ENCODE measurements at regions of chr19 and their contacts with region 1.

Region 1: GRCh38 chr19:56333505-56333904 is 18.9 kb upstream of the ZSCAN5A start:
- DNase-seq: peak in 5 of 9 donors; percentile 13 to 43 (median 32)
- ATAC-seq: peak; percentile 76
- H3K4me3 ChIP-seq: no peak overlapping the region
- H3K4me3 Mint-ChIP-seq: no peak overlapping the region
- H3K27ac ChIP-seq: no peak overlapping the region
- H3K27ac Mint-ChIP-seq: no peak overlapping the region
- H3K4me1 ChIP-seq: no peaks in the 10 kb centered on the region
- H3K4me1 Mint-ChIP-seq: no peaks in the 10 kb centered on the region
- H3K27me3 ChIP-seq: no peaks in the 10 kb centered on the region
- H3K27me3 Mint-ChIP-seq: peaks cover 0 to 9% (median 4%) of the 10 kb centered on the region in 5 donors

Region 2: DNA sequence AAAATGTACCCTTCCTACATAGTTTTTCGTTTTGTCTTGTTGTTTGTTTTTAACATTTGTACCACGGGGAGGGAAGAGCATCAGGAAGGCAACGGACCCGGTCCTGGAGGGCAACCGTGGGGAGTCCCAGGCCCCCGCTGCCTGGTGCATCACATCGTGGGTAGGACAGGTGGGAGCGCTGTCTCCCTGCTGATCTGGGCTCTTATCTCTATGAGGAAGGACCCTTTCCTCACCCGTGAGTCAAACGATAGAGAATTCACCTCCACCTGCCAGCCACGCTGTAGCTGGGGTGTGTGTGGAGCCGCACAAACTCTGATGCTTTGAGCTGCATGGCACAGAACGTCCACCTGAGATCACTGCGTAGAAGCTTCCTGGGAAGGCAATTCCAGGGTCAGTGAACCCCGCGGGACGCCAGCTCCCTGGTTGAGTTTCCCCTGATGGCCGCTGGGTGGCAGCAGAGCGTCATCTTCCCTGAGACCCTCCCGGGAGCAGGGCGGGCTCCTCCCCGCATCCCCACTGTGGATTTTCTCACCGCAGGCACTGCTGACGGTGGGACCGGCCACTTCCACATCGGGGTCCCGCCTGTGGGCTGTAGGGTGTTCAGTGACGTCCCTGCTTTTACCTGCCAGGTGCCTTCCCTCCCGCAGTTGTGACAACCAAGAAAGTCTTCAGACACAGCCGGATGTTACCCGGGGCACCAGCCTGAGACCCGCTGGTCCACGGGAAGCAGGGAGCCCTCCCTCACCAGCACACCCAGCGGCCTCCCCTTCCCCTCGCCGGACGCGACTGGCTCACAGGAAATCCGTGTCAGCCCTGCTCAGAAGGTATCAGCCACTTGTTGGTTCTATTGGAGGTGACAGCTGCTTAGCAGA is 267.1 kb before region 1 on chr19:
- CTCF ChIA-PET with region 1: interaction called, 6 read pairs
- POLR2A ChIA-PET with region 1: no interaction called
- intact Hi-C with region 1: loop called (anchors 1 kb)
- DNase-seq: peak; percentile 38 to 67 (median 58)
- ATAC-seq: peak; percentile 74
- H3K4me3 ChIP-seq: peak overlapping the region; percentile 38
- H3K4me3 Mint-ChIP-seq: peak overlapping the region; percentile 44 to 80 (median 74)
- H3K27ac ChIP-seq: no peak overlapping the region
- H3K27ac Mint-ChIP-seq: peak overlapping the region in 1 of 9 donors; percentile 17
- H3K4me1 ChIP-seq: no peaks in the 10 kb centered on the region
- H3K4me1 Mint-ChIP-seq: peaks cover 4 to 14% (median 12%) of the 10 kb centered on the region in 7 donors
- H3K27me3 ChIP-seq: no peaks in the 10 kb centered on the region
- H3K27me3 Mint-ChIP-seq: peaks cover 0 to 45% (median 38%) of the 10 kb centered on the region in 5 donors

Region 3: DNA sequence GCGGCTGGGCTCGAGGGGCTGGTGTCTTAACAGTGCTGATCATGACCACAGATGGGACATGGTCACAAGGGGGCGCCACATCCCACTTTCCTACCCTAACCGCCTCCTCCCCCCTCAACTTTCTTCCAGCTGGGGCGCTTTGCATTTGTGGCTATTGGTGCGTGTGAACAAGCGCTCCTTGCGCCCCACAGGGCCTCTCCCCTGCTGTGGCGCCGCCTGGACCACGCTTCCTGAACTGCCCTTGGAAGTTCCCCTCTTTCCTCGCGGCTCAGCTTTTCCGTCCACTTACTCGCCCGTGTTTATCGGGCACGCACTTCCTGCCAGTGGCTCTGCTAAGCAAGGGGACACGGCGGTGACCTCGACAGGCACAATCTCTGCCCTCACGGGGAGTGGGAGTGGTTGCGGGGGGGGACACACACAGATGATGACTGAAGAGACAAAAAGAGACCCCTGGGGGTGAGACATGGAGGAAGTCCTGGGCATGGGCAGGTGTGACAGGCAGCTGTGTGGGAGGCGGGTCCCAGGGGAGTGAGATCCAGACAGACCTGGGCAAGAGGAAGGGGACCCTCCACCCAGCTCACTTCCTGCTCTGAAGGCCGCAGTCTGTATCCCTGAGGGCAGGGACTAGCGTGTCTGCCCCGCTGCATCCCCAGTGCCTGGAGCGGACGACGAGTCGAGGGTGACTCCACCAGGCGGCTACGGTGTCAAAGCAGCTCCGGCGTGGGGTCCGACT is 252.7 kb before region 1 on chr19:
- CTCF ChIA-PET with region 1: interaction called, 9 read pairs
- POLR2A ChIA-PET with region 1: no interaction called
- intact Hi-C with region 1: loop called (anchors 1 kb)
- DNase-seq: peak; percentile 22 to 69 (median 47)
- ATAC-seq: peak; percentile 81
- H3K4me3 ChIP-seq: peak overlapping the region; percentile 58
- H3K4me3 Mint-ChIP-seq: peak overlapping the region; percentile 70 to 89 (median 80)
- H3K27ac ChIP-seq: no peak overlapping the region
- H3K27ac Mint-ChIP-seq: peak overlapping the region in 1 of 9 donors; percentile 31
- H3K4me1 ChIP-seq: peaks cover 7 to 8% of the 10 kb centered on the region in 2 donors
- H3K4me1 Mint-ChIP-seq: peaks cover 8 to 11% (median 11%) of the 10 kb centered on the region in 7 donors
- H3K27me3 ChIP-seq: no peaks in the 10 kb centered on the region
- H3K27me3 Mint-ChIP-seq: peaks cover 4 to 13% (median 10%) of the 10 kb centered on the region in 5 donors

Region 4: GRCh38 chr19:56125806-56126590 is 207.5 kb before region 1 on chr19:
- CTCF ChIA-PET with region 1: no interaction called
- POLR2A ChIA-PET with region 1: no interaction called
- intact Hi-C with region 1: no loop called
- DNase-seq: no peak
- ATAC-seq: no peak
- H3K4me3 ChIP-seq: no peak overlapping the region
- H3K4me3 Mint-ChIP-seq: peak overlapping the region in 2 of 10 donors; percentile 48 to 83
- H3K27ac ChIP-seq: no peak overlapping the region
- H3K27ac Mint-ChIP-seq: peak overlapping the region; percentile 19 to 95 (median 76)
- H3K4me1 ChIP-seq: peaks cover 5 to 34% of the 10 kb centered on the region in 2 donors
- H3K4me1 Mint-ChIP-seq: peaks cover 6 to 42% (median 34%) of the 10 kb centered on the region in 7 donors
- H3K27me3 ChIP-seq: no peaks in the 10 kb centered on the region
- H3K27me3 Mint-ChIP-seq: no peaks in the 10 kb centered on the region

Region 5: DNA sequence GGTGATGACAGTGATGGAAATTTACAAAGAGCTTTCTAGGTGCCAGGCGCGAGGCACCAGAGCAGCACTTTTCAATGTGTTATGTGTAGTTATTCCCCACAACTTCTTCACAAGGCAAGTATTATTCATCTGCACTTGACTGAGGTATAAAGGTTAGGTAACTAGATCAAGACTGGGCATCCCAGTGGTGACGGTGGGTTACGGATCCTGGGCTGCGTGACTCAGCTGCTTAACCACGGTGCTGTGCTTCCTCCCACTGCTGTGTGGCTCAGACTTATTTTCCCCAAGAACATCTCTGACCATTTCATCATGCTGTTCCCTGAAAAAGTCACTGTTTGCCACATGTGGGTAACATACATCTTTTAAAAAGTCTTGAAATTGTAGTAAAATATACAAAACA is 41.6 kb before region 1 on chr19:
- CTCF ChIA-PET with region 1: no interaction called
- POLR2A ChIA-PET with region 1: no interaction called
- intact Hi-C with region 1: no loop called
- DNase-seq: no peak
- ATAC-seq: no peak
- H3K4me3 ChIP-seq: no peak overlapping the region
- H3K4me3 Mint-ChIP-seq: no peak overlapping the region
- H3K27ac ChIP-seq: no peak overlapping the region
- H3K27ac Mint-ChIP-seq: no peak overlapping the region
- H3K4me1 ChIP-seq: no peaks in the 10 kb centered on the region
- H3K4me1 Mint-ChIP-seq: peaks cover 0 to 3% (median 0%) of the 10 kb centered on the region in 7 donors
- H3K27me3 ChIP-seq: no peaks in the 10 kb centered on the region
- H3K27me3 Mint-ChIP-seq: no peaks in the 10 kb centered on the region

Measured in naive thymus-derived CD4-positive, alpha-beta T cell (primary cell).